ENCODE measurements at regions of chr22 and their contacts with region 1.

Region 1: DNA sequence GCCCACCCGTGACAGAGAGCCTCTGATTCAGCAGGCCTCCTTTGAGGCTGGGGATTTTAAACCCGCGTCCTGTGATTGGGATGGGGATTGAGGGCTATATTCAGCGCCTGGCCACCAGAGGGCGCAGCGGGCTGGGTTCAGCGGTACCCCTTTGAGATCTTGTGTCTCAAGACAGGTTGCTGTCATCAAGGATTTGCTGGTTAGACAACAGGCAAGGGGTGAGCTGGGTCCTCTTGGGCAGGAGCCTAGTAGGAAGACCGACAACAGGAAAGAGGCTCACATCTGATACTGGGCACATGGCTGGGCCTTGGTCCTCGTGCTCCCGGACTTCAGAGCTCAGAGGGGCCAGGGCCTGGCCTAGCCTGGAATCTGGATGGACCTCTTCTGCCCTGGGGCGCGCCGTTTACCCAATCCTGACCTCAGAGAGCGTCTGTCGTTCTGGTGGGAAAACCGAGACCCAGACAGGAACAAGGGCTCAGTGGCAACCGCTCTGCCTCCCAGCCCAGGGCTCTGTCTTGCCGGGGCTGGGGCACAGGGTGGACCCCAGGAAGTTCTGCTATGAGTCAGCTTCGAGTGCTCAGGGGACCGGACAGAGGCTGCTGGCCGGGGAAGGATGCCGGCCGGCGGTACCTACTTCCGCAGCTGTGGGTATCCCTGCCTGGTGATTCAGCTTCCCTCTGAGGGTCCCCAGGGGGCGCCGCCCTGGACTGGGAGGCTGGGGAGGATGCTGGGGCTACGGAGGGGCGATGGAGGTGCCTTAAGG is 929 bp upstream of the SLC35E4 start:
- DNase-seq: peak; percentile 81 to 97 (median 86)
- ATAC-seq: peak; percentile 82
- H3K4me3 ChIP-seq: peak overlapping the region; percentile 14 to 61
- H3K27ac ChIP-seq: peak overlapping the region; percentile 89 to 95
- H3K4me1 ChIP-seq: peaks cover 25 to 36% of the 10 kb centered on the region in 2 donors
- H3K27me3 ChIP-seq: peaks cover 0 to 9% of the 10 kb centered on the region in 2 donors
- CTCF ChIP-seq: peak; percentile 94 to 96

Region 2: GRCh38 chr22:30754971-30755756 is 120.5 kb after region 1 on chr22:
- intact Hi-C with region 1: loop called in 1 of 2 experiments (anchors 10 kb)
- DNase-seq: peak in 3 of 4 donors; percentile 18 to 72 (median 44)
- ATAC-seq: peak; percentile 90
- H3K4me3 ChIP-seq: no peak overlapping the region
- H3K27ac ChIP-seq: no peak overlapping the region
- H3K4me1 ChIP-seq: no peaks in the 10 kb centered on the region
- H3K27me3 ChIP-seq: no peaks in the 10 kb centered on the region
- CTCF ChIP-seq: peak; percentile 34 to 57

Region 3: DNA sequence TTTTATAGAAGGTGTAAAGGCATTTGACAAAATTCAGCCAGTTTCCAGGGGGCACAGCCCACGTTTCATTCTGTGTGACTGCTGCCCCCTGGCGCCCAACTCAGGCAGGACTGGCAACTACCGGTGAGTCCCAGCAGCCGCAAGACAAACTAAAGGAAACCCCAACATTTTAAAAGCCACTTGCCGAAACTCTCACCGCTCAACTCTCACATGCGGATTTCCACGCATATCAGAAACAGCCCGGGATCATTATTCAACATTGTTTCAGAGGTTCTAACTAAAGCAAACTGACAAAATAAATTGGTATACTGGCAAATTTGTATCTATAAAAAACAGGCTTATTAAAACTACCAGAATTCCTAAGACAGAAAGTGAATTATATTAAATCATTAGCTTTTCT is 285.8 kb after region 1 on chr22:
- intact Hi-C with region 1: loop called in 1 of 2 experiments (anchors 10 kb)
- DNase-seq: peak; percentile 62 to 92 (median 76)
- ATAC-seq: peak; percentile 90
- H3K4me3 ChIP-seq: peak overlapping the region in 1 of 2 donors; percentile 47
- H3K27ac ChIP-seq: no peak overlapping the region
- H3K4me1 ChIP-seq: peaks cover 3 to 20% of the 10 kb centered on the region in 2 donors
- H3K27me3 ChIP-seq: no peaks in the 10 kb centered on the region
- CTCF ChIP-seq: peak; percentile 88 to 95